ENCODE measurements at regions of chr11 and their contacts with region 1.

Region 1: DNA sequence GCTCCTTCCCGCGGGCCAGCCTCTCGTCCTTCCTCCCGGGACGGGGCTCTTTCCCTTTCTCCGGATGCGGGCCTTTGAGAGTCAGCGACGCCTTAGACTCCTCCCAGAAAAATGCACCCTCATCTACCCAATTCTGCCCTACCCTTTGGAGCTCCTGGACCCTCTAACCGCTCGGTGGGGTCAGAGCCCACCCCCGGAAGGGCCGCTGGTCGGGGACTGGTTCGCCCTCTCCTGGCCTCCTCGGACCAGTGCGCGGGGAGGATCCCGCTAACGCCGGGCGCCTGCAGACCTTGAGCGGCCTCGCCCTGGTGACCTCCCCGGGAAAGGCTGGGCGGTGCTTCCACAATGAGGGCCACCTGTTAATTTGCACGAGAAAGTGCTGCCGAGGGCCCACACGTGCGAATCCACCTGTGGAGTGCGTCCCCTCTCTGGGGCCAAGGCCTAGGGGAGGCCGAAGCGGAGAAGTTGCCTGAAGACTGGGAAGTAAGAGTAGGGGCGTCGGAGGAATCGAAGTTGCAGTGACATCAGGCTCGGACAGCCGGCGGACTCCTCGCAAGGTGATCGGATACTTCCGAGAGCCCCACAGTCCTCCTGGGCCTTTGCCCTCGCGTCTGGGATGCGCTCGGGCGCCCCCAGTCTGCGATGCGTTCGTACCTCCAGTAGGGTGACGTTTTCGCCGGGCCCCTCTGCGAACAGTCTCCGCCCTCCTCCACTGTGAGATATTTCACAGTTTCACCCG is 61.5 kb downstream of the ENDOD1 start:
- DNase-seq: peak; percentile 78
- ATAC-seq: peak; percentile 90
- H3K4me3 Mint-ChIP-seq: peak overlapping the region; percentile 89
- H3K27ac Mint-ChIP-seq: peak overlapping the region; percentile 93
- H3K4me1 Mint-ChIP-seq: peaks cover 38% of the 10 kb centered on the region
- H3K27me3 Mint-ChIP-seq: no peaks in the 10 kb centered on the region
- CTCF ChIP-seq: no peak

Region 2: DNA sequence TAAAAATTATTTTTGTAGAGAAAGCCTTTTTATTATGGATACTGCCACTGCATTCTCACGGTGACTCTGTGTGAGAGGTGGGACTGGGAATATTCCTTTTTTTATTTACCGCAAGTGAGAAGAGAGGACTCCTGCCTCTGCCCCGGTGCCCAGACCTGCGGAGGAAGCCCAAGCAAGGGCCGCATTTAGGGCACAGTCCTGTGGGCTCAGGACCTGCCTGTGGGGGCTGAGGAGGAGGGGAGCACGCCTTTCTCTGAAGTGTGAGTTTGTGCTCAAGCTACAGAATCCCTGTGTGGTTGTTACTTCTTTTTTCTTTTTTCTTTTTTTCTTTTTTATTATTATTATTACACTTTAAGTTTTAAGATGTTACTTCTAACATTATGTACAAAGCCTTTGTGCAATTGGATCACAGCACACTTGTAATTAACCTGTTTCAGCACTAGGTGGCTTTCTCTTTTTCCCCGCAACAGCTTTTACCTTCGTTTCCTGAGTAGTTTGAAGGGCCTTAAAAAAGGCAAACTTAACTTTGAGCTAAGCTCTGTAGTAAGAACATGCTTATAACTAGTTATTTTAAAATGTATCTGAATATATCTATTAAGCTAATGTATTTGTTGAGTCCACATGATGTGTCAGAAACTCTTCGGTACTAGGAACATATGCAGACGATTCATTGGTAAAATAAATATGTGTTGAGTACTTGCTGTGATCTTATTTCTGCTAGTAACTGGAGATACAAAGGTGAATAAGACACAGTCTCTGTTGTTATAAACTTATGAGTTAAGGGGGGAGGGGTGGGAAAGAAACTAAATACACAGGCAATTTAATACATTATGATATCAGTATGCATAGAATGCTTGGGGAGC is 364.6 kb before region 1 on chr11:
- CTCF ChIA-PET with region 1: no interaction called
- POLR2A ChIA-PET with region 1: no interaction called
- intact Hi-C with region 1: loop called (anchors 5 kb)
- DNase-seq: no peak
- ATAC-seq: peak; percentile 42
- H3K4me3 Mint-ChIP-seq: no peak overlapping the region
- H3K27ac Mint-ChIP-seq: no peak overlapping the region
- H3K4me1 Mint-ChIP-seq: no peaks in the 10 kb centered on the region
- H3K27me3 Mint-ChIP-seq: no peaks in the 10 kb centered on the region
- CTCF ChIP-seq: no peak

Region 3: DNA sequence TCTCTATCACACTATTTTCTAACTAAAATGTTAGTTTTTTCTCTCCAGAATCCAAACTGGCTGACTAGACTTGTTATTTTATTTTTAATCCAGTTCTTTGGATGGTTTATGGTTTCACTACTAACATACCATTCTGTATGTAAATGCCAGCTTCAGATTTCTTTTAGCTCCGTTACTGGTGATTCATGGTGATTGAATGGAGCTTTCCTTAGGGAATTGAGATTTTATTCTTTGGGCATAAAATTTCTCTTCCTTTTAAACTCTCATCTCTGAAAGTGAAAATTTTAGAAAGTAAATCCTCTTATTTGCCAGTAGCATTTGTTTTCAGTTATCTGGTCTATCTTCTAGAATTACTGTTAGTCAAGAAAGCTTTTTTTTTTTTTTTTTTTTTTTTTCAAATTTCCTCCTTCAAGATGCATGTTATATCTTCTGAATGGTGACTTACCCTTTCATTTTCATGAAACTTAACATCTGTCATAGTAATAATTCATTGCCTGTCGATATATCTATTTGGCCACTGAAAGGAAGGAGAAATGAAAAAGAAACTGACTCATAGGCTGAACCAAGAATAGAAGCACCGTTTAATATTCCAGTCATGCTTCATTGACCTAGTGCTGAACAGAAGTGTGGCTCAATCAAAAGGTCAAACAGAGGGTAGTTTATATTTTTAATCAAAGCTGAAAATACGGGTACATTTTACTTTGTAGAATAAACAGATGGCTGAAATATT is 55.1 kb before region 1 on chr11:
- CTCF ChIA-PET with region 1: interaction called, 9 read pairs
- POLR2A ChIA-PET with region 1: interaction called, 29 read pairs
- intact Hi-C with region 1: loop called (anchors 1 kb)
- DNase-seq: no peak
- ATAC-seq: peak; percentile 89
- H3K4me3 Mint-ChIP-seq: peak overlapping the region; percentile 59
- H3K27ac Mint-ChIP-seq: peak overlapping the region; percentile 78
- H3K4me1 Mint-ChIP-seq: peaks cover 94% of the 10 kb centered on the region
- H3K27me3 Mint-ChIP-seq: no peaks in the 10 kb centered on the region
- CTCF ChIP-seq: no peak

Region 4: DNA sequence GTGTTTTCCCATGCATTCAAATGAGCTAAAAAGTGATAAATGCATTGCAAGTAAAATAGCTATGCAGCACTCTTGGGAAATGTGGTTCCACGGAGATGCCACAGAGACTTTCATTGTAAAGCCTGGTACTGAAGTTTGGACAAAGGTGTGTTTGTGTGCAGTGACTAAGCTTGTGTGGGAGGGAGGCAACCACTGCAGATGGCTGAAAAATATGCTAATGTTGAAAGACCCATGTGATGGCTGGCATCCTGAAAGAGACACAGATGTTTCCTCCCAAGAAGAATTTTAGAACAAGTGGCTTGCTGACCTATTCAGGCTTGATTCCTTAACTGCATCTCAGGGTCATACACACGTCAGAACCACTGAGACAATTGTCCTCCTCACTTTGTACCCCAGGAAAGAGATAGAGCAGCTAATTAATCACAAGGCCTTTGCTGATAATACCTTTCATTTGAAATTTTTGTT is 564.7 kb after region 1 on chr11:
- CTCF ChIA-PET with region 1: interaction called, 305 read pairs
- POLR2A ChIA-PET with region 1: interaction called, 29 read pairs
- intact Hi-C with region 1: loop called (anchors 1 kb)
- DNase-seq: peak; percentile 39
- ATAC-seq: peak; percentile 78
- H3K4me3 Mint-ChIP-seq: peak overlapping the region; percentile 75
- H3K27ac Mint-ChIP-seq: peak overlapping the region; percentile 95
- H3K4me1 Mint-ChIP-seq: peaks cover 92% of the 10 kb centered on the region
- H3K27me3 Mint-ChIP-seq: no peaks in the 10 kb centered on the region
- CTCF ChIP-seq: no peak

Region 5: GRCh38 chr11:95835768-95836488 is 684.8 kb after region 1 on chr11:
- CTCF ChIA-PET with region 1: interaction called, 6 read pairs
- POLR2A ChIA-PET with region 1: no interaction called
- intact Hi-C with region 1: loop called (anchors 5 kb)
- DNase-seq: no peak
- ATAC-seq: peak; percentile 87
- H3K4me3 Mint-ChIP-seq: no peak overlapping the region
- H3K27ac Mint-ChIP-seq: no peak overlapping the region
- H3K4me1 Mint-ChIP-seq: peaks cover 2% of the 10 kb centered on the region
- H3K27me3 Mint-ChIP-seq: no peaks in the 10 kb centered on the region
- CTCF ChIP-seq: no peak

Region 6: DNA sequence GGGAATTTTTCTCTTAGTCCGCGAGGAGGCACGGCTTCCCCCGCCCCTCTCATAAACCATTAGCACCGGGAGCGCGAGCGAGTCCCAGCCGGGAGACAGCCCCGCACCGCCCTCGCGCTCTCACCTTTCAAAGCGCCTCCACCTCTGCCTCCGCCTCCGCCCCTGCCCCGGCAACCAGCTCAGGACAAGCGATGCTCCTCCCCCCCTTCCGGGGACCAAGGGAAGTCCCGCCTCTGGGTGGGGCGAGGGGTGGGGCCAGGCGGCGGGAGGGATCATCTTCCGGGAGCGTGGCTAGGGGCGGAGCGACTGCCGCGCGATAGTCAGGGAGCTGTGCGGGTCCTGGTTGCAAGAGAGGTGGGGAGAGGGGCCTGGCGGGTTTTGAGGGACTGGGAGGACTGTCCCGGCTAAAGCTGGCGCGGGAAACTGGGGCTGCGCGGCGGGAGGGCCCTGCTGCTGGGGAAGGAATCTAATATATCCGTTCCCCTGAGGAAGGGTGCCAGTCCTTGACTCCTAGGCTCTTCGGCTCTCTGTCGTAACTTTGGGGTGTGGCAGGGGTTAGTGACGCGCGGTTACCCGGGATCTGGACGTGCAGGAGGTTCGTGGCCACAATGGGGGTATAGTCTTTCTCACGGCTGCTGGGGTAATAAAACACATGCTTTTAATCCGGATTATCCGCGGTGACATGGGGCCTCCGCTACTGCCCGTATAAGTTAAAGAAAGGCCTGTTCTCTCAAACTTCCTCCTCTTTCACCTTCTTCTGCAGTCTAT is 1238.8 kb after region 1 on chr11 and contains the starts of genes CCDC82 and JRKL:
- CTCF ChIA-PET with region 1: no interaction called
- POLR2A ChIA-PET with region 1: no interaction called
- intact Hi-C with region 1: loop called (anchors 2 kb)
- DNase-seq: peak; percentile 99
- ATAC-seq: peak; percentile 98
- H3K4me3 Mint-ChIP-seq: peak within 1 kb of the TSS; percentile 94
- H3K27ac Mint-ChIP-seq: peak within 1 kb of the TSS; percentile 90
- H3K4me1 Mint-ChIP-seq: peaks cover 33% of the 10 kb centered on the region
- H3K27me3 Mint-ChIP-seq: no peaks in the 10 kb centered on the region
- CTCF ChIP-seq: no peak
- total RNA-seq, gene CCDC82: 22.6 and 33.8 TPM in 2 replicates
- total RNA-seq, gene JRKL: 9.6 and 9.8 TPM in 2 replicates

Measured in activated B cell treated with CpG ODN at 0.5 μM for 24 hours (primary cell).